CD8-positive, alpha-beta T cell (primary cell): ENCODE measurements at regions of chr3 and their contacts with region 1.

Region 1: DNA sequence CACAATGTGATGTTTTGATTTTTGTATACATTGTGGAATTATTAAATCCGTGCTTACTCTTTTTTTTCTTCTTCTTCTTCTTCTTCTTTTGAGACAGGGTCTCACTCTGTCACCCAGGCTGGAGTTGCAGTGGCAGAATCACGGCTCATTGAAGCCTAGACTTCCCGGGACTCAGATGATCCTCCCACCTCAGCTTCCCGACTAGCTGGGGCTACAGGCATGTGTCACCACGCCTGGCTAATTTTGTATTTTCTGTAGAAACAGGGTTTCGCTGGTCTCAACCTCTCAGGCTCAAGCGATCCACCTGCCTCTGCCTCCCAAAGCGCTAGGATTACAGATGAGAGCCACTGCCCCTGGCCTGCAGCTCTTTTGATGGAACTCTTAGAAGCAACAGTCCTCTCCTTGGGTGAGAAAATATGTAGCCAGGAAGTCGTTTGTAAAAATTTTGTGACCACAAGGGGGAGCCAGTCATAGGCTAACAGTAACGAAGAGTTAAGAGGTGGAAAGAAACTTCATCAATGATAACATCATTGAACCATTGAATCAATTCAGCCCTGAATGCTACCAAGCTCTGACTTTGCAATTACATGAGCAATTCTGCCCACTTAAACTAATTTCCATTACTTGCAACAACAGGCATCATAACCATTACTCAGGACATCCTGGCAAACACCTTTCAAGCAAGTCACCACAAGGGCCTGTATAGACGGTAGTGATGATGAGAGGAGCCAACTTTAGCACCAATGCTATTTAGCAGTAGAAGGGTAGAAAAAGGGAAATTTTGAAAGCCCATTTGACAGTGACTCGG is 16.7 kb upstream of the CMTM7 start:
- DNase-seq: peak; percentile 40 to 88 (median 66)
- ATAC-seq: peak; percentile 32
- H3K4me3 ChIP-seq: no peak overlapping the region
- H3K4me3 Mint-ChIP-seq: no peak overlapping the region
- H3K27ac ChIP-seq: no peak overlapping the region
- H3K27ac Mint-ChIP-seq: peak overlapping the region; percentile 18
- H3K4me1 ChIP-seq: peaks cover 31% of the 10 kb centered on the region
- H3K4me1 Mint-ChIP-seq: peaks cover 41% of the 10 kb centered on the region
- H3K27me3 ChIP-seq: no peaks in the 10 kb centered on the region
- H3K27me3 Mint-ChIP-seq: no peaks in the 10 kb centered on the region
- CTCF ChIP-seq: peak; percentile 78

Region 2: GRCh38 chr3:32296256-32297204 is 78.5 kb before region 1 on chr3:
- CTCF ChIA-PET with region 1: interaction called, 35 read pairs
- POLR2A ChIA-PET with region 1: no interaction called
- intact Hi-C with region 1: loop called (anchors 1 to 2 kb)
- DNase-seq: peak; percentile 16 to 79 (median 62)
- ATAC-seq: peak; percentile 76
- H3K4me3 ChIP-seq: no peak overlapping the region
- H3K4me3 Mint-ChIP-seq: peak overlapping the region; percentile 61
- H3K27ac ChIP-seq: no peak overlapping the region
- H3K27ac Mint-ChIP-seq: peak overlapping the region; percentile 85
- H3K4me1 ChIP-seq: peaks cover 7% of the 10 kb centered on the region
- H3K4me1 Mint-ChIP-seq: peaks cover 15% of the 10 kb centered on the region
- H3K27me3 ChIP-seq: no peaks in the 10 kb centered on the region
- H3K27me3 Mint-ChIP-seq: no peaks in the 10 kb centered on the region
- CTCF ChIP-seq: peak; percentile 91

Region 3: DNA sequence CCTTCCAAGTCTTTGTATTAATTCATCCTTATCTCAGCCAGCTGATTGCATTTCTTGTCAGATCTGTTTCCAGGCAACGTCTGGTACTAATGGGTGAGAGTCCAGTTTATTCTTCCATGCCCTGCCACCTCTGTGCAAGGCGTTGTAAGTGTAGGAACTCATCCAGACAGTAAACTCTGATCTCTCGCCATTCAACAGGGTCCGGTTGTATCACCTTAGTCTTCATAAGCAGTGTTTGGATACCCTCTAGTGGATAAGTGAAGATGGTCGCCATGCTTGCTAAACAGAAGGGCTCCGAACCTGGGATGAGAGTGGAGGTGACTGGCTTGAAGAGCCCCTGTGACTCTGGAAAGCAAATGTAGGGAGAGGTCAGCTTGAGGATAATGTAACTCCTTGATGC is 35.0 kb before region 1 on chr3:
- CTCF ChIA-PET with region 1: interaction called, 12 read pairs
- POLR2A ChIA-PET with region 1: interaction called, 3 read pairs
- intact Hi-C with region 1: no loop called
- DNase-seq: peak in 6 of 9 experiments; percentile 21 to 64 (median 40)
- ATAC-seq: peak; percentile 78
- H3K4me3 ChIP-seq: no peak overlapping the region
- H3K4me3 Mint-ChIP-seq: no peak overlapping the region
- H3K27ac ChIP-seq: no peak overlapping the region
- H3K27ac Mint-ChIP-seq: no peak overlapping the region
- H3K4me1 ChIP-seq: peaks cover 13% of the 10 kb centered on the region
- H3K4me1 Mint-ChIP-seq: peaks cover 17% of the 10 kb centered on the region
- H3K27me3 ChIP-seq: no peaks in the 10 kb centered on the region
- H3K27me3 Mint-ChIP-seq: no peaks in the 10 kb centered on the region
- CTCF ChIP-seq: peak; percentile 66

Region 4: GRCh38 chr3:32391643-32392535 is 16.9 kb after region 1 on chr3 and contains the start of gene CMTM7:
- CTCF ChIA-PET with region 1: interaction called, 41 read pairs
- POLR2A ChIA-PET with region 1: interaction called, 15 read pairs
- intact Hi-C with region 1: loop called (anchors 1 to 2 kb)
- DNase-seq: peak; percentile 26 to 79 (median 61)
- ATAC-seq: peak; percentile 63
- H3K4me3 ChIP-seq: peak within 1 kb of the TSS; percentile 69 to 70
- H3K4me3 Mint-ChIP-seq: peak within 1 kb of the TSS; percentile 97
- H3K27ac ChIP-seq: peak within 1 kb of the TSS; percentile 73 to 77
- H3K27ac Mint-ChIP-seq: peak within 1 kb of the TSS; percentile 98
- H3K4me1 ChIP-seq: peaks cover 29% of the 10 kb centered on the region
- H3K4me1 Mint-ChIP-seq: peaks cover 65% of the 10 kb centered on the region
- H3K27me3 ChIP-seq: no peaks in the 10 kb centered on the region
- H3K27me3 Mint-ChIP-seq: no peaks in the 10 kb centered on the region
- CTCF ChIP-seq: no peak
- total RNA-seq, gene CMTM7: 18.8 to 19.5 TPM

Region 5: GRCh38 chr3:32414520-32415202 is 39.7 kb after region 1 on chr3:
- CTCF ChIA-PET with region 1: interaction called, 26 read pairs
- POLR2A ChIA-PET with region 1: interaction called, 4 read pairs
- intact Hi-C with region 1: no loop called
- DNase-seq: peak in 7 of 9 experiments; percentile 26 to 80 (median 63)
- ATAC-seq: peak; percentile 94
- H3K4me3 ChIP-seq: no peak overlapping the region
- H3K4me3 Mint-ChIP-seq: peak overlapping the region; percentile 55
- H3K27ac ChIP-seq: peak overlapping the region; percentile 57 to 80
- H3K27ac Mint-ChIP-seq: peak overlapping the region; percentile 97
- H3K4me1 ChIP-seq: peaks cover 56% of the 10 kb centered on the region
- H3K4me1 Mint-ChIP-seq: peaks cover 81% of the 10 kb centered on the region
- H3K27me3 ChIP-seq: no peaks in the 10 kb centered on the region
- H3K27me3 Mint-ChIP-seq: no peaks in the 10 kb centered on the region
- CTCF ChIP-seq: no peak

Region 6: GRCh38 chr3:32428092-32429068 is 53.4 kb after region 1 on chr3:
- CTCF ChIA-PET with region 1: interaction called, 24 read pairs
- POLR2A ChIA-PET with region 1: interaction called, 7 read pairs
- intact Hi-C with region 1: loop called in 1 of 2 experiments (anchors 2 kb)
- DNase-seq: peak in 8 of 9 experiments; percentile 29 to 82 (median 55)
- ATAC-seq: peak; percentile 59
- H3K4me3 ChIP-seq: peak overlapping the region in 1 of 2 experiments; percentile 26
- H3K4me3 Mint-ChIP-seq: peak overlapping the region; percentile 76
- H3K27ac ChIP-seq: peak overlapping the region; percentile 58 to 81
- H3K27ac Mint-ChIP-seq: peak overlapping the region; percentile 96
- H3K4me1 ChIP-seq: peaks cover 98% of the 10 kb centered on the region
- H3K4me1 Mint-ChIP-seq: peaks cover 94% of the 10 kb centered on the region
- H3K27me3 ChIP-seq: no peaks in the 10 kb centered on the region
- H3K27me3 Mint-ChIP-seq: no peaks in the 10 kb centered on the region
- CTCF ChIP-seq: no peak

Region 7: DNA sequence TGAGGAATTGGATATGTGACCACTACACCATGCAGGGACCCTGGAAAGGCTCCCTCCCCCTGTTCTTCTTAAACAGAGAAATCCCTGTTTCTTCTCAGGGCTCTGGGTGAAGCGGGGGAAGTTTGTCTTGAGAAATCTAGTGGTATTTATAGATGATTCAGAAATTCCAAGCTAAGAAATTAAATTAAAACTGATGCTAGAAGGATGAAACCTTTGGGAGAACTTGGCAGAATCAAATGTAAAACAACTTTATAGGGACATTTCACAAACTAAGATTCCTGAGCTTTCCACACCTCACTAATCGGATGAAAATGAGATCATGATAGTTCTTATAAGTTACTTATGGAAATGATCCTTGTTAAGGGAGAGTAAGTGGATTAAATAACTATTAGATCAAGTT is 956.4 kb after region 1 on chr3:
- CTCF ChIA-PET with region 1: no interaction called
- POLR2A ChIA-PET with region 1: no interaction called
- intact Hi-C with region 1: no loop called
- DNase-seq: no peak
- ATAC-seq: no peak
- H3K4me3 ChIP-seq: no peak overlapping the region
- H3K4me3 Mint-ChIP-seq: no peak overlapping the region
- H3K27ac ChIP-seq: no peak overlapping the region
- H3K27ac Mint-ChIP-seq: no peak overlapping the region
- H3K4me1 ChIP-seq: no peaks in the 10 kb centered on the region
- H3K4me1 Mint-ChIP-seq: no peaks in the 10 kb centered on the region
- H3K27me3 ChIP-seq: peaks cover 0 to 2% of the 10 kb centered on the region in 2 experiments
- H3K27me3 Mint-ChIP-seq: peaks cover 5% of the 10 kb centered on the region
- CTCF ChIP-seq: no peak